A673 (cell line): ENCODE measurements at regions of chr18 and their contacts with region 1.

Region 1: GRCh38 chr18:32899819-32900218 is 127.0 kb upstream of the KLHL14 start:
- DNase-seq: no peak
- H3K4me3 ChIP-seq: no peak overlapping the region
- H3K27ac ChIP-seq: no peak overlapping the region
- H3K4me1 ChIP-seq: no peaks in the 10 kb centered on the region
- H3K27me3 ChIP-seq: no peaks in the 10 kb centered on the region
- CTCF ChIP-seq: no peak

Region 2: GRCh38 chr18:32847691-32848090 is 52.1 kb before region 1 on chr18:
- CTCF ChIA-PET with region 1: no interaction called
- POLR2A ChIA-PET with region 1: no interaction called
- intact Hi-C with region 1: loop called (anchors 5 kb)
- DNase-seq: peak; percentile 2
- H3K4me3 ChIP-seq: no peak overlapping the region
- H3K27ac ChIP-seq: no peak overlapping the region
- H3K4me1 ChIP-seq: no peaks in the 10 kb centered on the region
- H3K27me3 ChIP-seq: no peaks in the 10 kb centered on the region
- CTCF ChIP-seq: no peak

Region 3: GRCh38 chr18:33901894-33902512 is 1002.2 kb after region 1 on chr18:
- CTCF ChIA-PET with region 1: no interaction called
- POLR2A ChIA-PET with region 1: no interaction called
- intact Hi-C with region 1: no loop called
- DNase-seq: no peak
- H3K4me3 ChIP-seq: no peak overlapping the region
- H3K27ac ChIP-seq: no peak overlapping the region
- H3K4me1 ChIP-seq: no peaks in the 10 kb centered on the region
- H3K27me3 ChIP-seq: no peaks in the 10 kb centered on the region
- CTCF ChIP-seq: no peak